GM10248 (cell line): ENCODE measurements at regions of chr22 and their contacts with region 1.

Region 1: DNA sequence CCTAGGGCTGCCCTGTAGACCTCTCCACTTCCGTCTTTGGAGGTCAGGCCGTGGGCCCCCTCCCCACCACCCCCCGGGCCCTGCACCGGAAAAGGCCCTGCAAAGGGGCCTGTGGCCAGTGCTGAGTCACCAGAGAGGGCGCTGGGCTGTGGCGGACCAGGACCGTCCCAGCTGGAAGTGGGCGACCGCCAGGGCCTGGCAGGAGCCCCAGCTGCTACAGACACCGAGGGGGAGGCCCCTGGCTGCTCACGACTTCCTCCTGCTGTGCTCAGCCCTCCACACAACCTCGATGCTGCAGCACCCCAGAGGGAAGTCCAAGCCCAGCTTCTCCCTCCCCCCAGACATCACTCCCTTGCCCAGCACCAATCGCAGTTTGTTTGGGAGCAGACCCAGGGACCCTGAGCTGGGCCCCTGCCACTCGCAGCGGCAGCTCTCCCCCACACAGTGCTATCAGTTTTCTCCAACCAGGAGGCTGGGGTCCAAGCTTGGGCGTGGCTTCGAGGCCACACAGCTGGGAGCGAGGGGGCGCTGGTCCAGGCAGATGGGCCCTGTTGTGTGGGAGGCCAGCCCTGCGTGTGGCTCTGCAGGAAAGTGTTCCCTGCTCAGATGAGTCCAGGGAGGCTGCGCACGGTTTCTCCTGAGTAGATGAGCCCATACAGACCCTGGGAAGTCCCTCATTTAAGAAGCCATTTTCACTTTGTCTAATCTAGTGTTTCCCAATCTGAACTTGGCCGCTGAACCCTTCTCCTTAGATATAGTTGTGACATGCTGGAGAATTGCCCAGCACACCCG is 5.6 kb upstream of the SH3BP1 start:
- DNase-seq: peak; percentile 92
- CTCF ChIP-seq: peak; percentile 44

Region 2: GRCh38 chr22:37186228-37186996 is 447.4 kb before region 1 on chr22:
- CTCF ChIA-PET with region 1: no interaction called
- POLR2A ChIA-PET with region 1: no interaction called
- DNase-seq: peak; percentile 80
- CTCF ChIP-seq: no peak

Region 3: GRCh38 chr22:37623075-37624016 is 10.5 kb before region 1 on chr22:
- CTCF ChIA-PET with region 1: interaction called, 102 read pairs
- POLR2A ChIA-PET with region 1: interaction called, 6 read pairs
- DNase-seq: peak; percentile 86
- CTCF ChIP-seq: peak; percentile 82